Activated naive CD4-positive, alpha-beta T cell treated with anti-CD3 and anti-CD28 coated beads for 36 hours (primary cell): ENCODE measurements at regions of chr5 and their contacts with region 1.

Region 1: GRCh38 chr5:39217365-39218281 is 1.7 kb downstream of the FYB1 start:
- DNase-seq: peak; percentile 91
- H3K4me3 Mint-ChIP-seq: peak overlapping the region; percentile 72
- H3K27ac Mint-ChIP-seq: peak overlapping the region; percentile 91
- H3K4me1 Mint-ChIP-seq: peaks cover 70% of the 10 kb centered on the region
- H3K27me3 Mint-ChIP-seq: no peaks in the 10 kb centered on the region

Region 2: GRCh38 chr5:38994324-38994927 is 223.2 kb before region 1 on chr5:
- CTCF ChIA-PET with region 1: interaction called, 3 read pairs
- intact Hi-C with region 1: loop called (anchors 2 kb)
- DNase-seq: peak; percentile 55
- H3K4me3 Mint-ChIP-seq: no peak overlapping the region
- H3K27ac Mint-ChIP-seq: no peak overlapping the region
- H3K4me1 Mint-ChIP-seq: peaks cover 14% of the 10 kb centered on the region
- H3K27me3 Mint-ChIP-seq: no peaks in the 10 kb centered on the region

Region 3: GRCh38 chr5:39177631-39177964 is 40.0 kb before region 1 on chr5:
- CTCF ChIA-PET with region 1: interaction called, 23 read pairs
- intact Hi-C with region 1: loop called (anchors 1 kb)
- DNase-seq: no peak
- H3K4me3 Mint-ChIP-seq: peak overlapping the region; percentile 75
- H3K27ac Mint-ChIP-seq: peak overlapping the region; percentile 92
- H3K4me1 Mint-ChIP-seq: peaks cover 95% of the 10 kb centered on the region
- H3K27me3 Mint-ChIP-seq: no peaks in the 10 kb centered on the region

Region 4: DNA sequence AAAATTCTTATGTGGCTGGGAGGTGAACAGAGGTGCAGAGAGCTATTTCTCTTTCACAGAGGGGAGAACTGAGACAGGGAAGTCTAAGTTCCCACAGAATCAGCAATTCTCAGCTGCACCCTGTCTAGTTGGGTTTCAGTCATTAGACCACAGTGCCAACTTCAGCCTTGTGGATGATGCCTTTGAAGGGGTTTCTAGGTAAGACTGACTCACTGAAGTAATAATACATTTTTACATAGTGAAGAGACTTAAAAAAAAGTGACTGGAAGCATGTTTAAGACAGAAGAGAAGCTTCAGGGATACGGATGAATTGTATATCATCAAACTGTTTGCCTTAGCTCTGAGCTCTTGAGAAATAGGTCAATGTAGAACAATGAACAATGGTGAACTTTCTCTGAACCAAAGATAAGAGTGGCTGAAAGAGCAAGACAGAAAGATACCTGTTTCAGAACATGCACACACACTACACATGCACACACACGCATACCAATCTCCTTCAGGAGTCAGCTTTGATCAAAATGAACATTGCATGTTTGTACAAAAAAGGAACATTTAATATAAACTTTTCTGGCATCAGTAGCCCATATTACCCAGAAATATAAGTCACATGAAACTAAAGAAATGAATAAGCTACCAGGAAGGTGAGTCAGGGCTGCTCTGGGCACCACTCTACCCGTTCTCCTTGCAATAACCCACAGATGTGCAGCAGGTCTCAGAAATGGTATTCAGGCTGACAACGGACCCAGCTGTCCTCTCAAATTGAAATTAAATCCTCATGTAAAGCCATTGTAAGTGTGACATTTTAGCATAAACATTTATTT is 14.3 kb after region 1 on chr5:
- CTCF ChIA-PET with region 1: interaction called, 98 read pairs
- intact Hi-C with region 1: loop called (anchors 1 kb)
- DNase-seq: peak; percentile 72
- H3K4me3 Mint-ChIP-seq: peak overlapping the region; percentile 52
- H3K27ac Mint-ChIP-seq: peak overlapping the region; percentile 90
- H3K4me1 Mint-ChIP-seq: peaks cover 14% of the 10 kb centered on the region
- H3K27me3 Mint-ChIP-seq: no peaks in the 10 kb centered on the region

Region 5: GRCh38 chr5:39352951-39353350 is 135.3 kb after region 1 on chr5:
- CTCF ChIA-PET with region 1: no interaction called
- intact Hi-C with region 1: loop called (anchors 5 kb)
- DNase-seq: no peak
- H3K4me3 Mint-ChIP-seq: no peak overlapping the region
- H3K27ac Mint-ChIP-seq: no peak overlapping the region
- H3K4me1 Mint-ChIP-seq: peaks cover 4% of the 10 kb centered on the region
- H3K27me3 Mint-ChIP-seq: no peaks in the 10 kb centered on the region

Region 6: DNA sequence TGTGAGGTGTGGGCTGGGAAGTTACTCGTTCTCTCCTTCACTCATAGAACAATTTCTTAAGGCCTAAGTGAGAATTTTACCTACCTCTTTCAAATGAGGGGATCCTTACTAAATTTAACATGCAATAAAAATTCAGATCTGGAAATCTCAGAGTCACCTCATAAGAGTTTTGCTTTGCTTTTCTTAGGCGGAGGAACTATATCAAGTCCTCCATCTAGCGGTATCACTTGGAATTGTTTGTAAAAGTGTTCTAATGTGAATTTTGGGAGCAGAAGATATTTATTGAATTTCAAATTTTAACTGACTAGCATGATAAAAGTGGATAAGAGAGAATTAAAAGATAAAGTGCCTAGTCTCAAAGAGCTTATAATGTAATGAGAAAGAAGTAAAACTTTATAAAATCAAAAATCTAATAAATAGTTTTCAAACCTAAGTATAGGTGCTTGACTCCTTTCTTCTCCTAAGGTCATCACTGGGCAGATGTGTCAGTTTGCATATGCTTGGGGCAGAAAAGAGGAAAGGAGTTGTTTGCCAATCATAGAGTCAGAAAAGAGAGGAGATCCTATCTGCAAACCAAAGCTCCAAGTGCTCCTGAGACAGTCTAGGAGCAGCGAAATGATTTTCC is 352.9 kb after region 1 on chr5:
- CTCF ChIA-PET with region 1: no interaction called
- intact Hi-C with region 1: loop called (anchors 5 kb)
- DNase-seq: no peak
- H3K4me3 Mint-ChIP-seq: no peak overlapping the region
- H3K27ac Mint-ChIP-seq: no peak overlapping the region
- H3K4me1 Mint-ChIP-seq: no peaks in the 10 kb centered on the region
- H3K27me3 Mint-ChIP-seq: peaks cover 5% of the 10 kb centered on the region

Region 7: GRCh38 chr5:39760385-39761198 is 543.0 kb after region 1 on chr5:
- CTCF ChIA-PET with region 1: no interaction called
- intact Hi-C with region 1: no loop called
- DNase-seq: no peak
- H3K4me3 Mint-ChIP-seq: no peak overlapping the region
- H3K27ac Mint-ChIP-seq: no peak overlapping the region
- H3K4me1 Mint-ChIP-seq: no peaks in the 10 kb centered on the region
- H3K27me3 Mint-ChIP-seq: peaks cover 3% of the 10 kb centered on the region

Region 8: GRCh38 chr5:40649463-40650030 is 1431.9 kb after region 1 on chr5:
- CTCF ChIA-PET with region 1: no interaction called
- intact Hi-C with region 1: no loop called
- DNase-seq: no peak
- H3K4me3 Mint-ChIP-seq: no peak overlapping the region
- H3K27ac Mint-ChIP-seq: peak overlapping the region; percentile 44
- H3K4me1 Mint-ChIP-seq: peaks cover 50% of the 10 kb centered on the region
- H3K27me3 Mint-ChIP-seq: no peaks in the 10 kb centered on the region